Activated CD4-positive, alpha-beta T cell treated with anti-CD3 and anti-CD28 coated beads for 36 hours (primary cell): ENCODE measurements at regions of chr3 and their contacts with region 1.

Region 1: GRCh38 chr3:182683453-182683852 is 109.9 kb upstream of the ATP11B start:
- DNase-seq: peak; percentile 72
- ATAC-seq: peak; percentile 77
- H3K4me3 Mint-ChIP-seq: peak overlapping the region; percentile 52
- H3K27ac Mint-ChIP-seq: no peak overlapping the region
- H3K4me1 Mint-ChIP-seq: peaks cover 9% of the 10 kb centered on the region
- H3K27me3 Mint-ChIP-seq: peaks cover 39% of the 10 kb centered on the region

Region 2: GRCh38 chr3:181210275-181210674 is 1473.2 kb before region 1 on chr3:
- CTCF ChIA-PET with region 1: no interaction called
- POLR2A ChIA-PET with region 1: no interaction called
- intact Hi-C with region 1: loop called (anchors 2 to 10 kb)
- DNase-seq: no peak
- ATAC-seq: no peak
- H3K4me3 Mint-ChIP-seq: no peak overlapping the region
- H3K27ac Mint-ChIP-seq: no peak overlapping the region
- H3K4me1 Mint-ChIP-seq: no peaks in the 10 kb centered on the region
- H3K27me3 Mint-ChIP-seq: peaks cover 2% of the 10 kb centered on the region

Region 3: DNA sequence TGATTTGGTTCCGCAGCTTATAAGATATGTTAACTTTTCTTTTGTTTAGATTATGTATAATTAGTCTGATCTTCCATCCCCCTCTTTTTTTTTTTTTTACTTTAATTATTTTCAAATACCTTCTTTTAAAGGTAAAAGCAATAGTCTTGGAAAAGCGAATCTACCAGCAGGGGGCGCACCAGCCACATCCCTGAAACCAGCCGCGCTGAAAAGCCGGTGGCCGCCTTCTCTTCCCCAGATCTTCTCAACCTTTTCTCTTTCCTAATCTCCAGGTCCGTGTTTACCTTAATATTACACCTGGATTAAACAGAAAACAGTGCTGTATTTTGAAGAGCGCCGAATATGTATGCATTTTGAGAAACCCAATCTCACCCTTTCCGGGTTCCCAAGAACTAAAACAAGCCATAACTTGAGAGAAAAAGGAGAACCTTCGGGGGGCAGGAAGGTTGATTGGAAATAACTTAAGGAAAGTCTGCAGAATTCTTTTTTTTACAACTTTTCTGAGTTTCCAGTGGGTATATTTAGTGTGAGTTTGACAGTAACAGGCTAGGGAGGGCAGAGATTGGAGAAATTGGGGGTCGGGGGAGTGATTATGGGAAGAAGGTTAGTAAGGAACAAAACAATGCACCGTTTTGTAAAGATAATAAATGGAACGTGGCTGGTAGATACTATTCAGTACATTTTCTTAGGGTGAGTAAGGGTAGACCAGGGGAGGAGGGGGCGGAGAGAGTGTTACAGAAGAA is 973.7 kb before region 1 on chr3:
- CTCF ChIA-PET with region 1: interaction called, 13 read pairs
- POLR2A ChIA-PET with region 1: no interaction called
- intact Hi-C with region 1: loop called (anchors 1 kb)
- DNase-seq: peak; percentile 85
- ATAC-seq: no peak
- H3K4me3 Mint-ChIP-seq: no peak overlapping the region
- H3K27ac Mint-ChIP-seq: no peak overlapping the region
- H3K4me1 Mint-ChIP-seq: peaks cover 6% of the 10 kb centered on the region
- H3K27me3 Mint-ChIP-seq: peaks cover 52% of the 10 kb centered on the region

Region 4: DNA sequence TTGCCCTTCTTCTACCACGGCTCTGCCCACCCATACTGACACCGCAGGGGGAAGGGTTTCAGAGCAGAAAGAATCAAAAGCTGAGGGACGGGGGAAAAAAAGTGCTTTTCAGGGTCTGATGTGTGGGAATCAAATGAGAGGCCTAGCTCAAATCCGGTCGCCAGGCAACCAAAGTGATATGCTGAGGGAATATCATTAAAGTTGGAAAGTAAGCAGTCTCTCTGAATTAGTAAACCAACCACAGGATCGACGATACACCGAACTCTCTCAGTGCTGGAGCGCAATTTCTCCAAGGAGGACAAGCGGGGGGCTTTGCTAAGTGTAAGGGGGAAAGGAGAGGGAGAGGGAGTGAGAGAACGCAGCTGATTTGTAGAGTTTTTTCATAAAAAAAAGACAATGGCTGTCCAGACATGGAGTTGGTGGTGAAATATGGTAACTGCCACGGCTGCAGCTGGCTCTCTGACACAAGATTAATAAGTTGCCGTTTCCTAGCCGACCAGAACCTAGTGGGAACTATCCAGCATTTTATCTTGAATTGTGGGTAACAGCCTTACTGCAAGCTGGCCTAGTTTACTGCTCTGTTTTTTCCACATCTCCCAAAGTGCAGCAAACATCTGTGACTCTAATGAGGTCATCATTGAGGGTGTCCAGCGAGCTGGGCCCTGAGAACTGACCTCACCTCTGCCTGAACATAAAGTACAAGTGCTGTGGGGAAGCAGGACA is 441.5 kb before region 1 on chr3:
- CTCF ChIA-PET with region 1: no interaction called
- POLR2A ChIA-PET with region 1: no interaction called
- intact Hi-C with region 1: loop called in 1 of 2 experiments (anchors 10 kb)
- DNase-seq: no peak
- ATAC-seq: no peak
- H3K4me3 Mint-ChIP-seq: no peak overlapping the region
- H3K27ac Mint-ChIP-seq: no peak overlapping the region
- H3K4me1 Mint-ChIP-seq: no peaks in the 10 kb centered on the region
- H3K27me3 Mint-ChIP-seq: no peaks in the 10 kb centered on the region

Region 5: DNA sequence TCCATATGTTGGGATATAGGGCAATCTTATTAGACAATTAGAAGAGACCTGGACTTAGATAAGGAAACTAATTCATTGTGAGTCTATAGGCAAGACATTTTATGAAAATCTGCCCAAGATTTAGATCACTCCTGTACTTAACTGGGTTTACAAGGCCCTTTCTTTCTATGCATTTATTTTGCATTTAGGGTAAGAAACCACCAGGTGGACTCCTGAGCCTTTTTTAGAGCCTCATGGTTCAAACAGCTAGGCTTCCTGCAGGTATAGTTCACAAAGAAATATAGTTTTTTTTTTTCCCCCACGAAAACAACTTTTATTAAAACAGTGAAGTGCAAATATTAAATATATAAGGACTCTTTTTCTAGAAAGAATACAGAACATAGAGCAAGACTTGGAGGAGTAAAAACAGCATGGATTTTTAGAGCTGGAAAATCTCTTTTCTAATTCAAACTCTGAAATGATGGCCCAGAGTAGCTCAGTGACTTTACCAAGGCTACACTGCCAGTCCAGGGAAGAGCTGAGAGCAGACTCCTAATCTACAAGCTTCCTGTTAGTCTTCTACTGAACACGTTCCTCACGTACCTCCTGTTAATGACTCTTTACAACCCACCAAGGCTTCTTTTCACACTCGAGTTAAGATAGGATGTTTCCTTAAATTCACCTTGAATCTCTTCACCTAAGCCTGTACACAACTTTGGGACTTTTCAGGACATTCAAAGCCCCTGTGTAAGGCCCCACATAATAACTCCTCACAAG is 291.1 kb before region 1 on chr3:
- CTCF ChIA-PET with region 1: interaction called, 4 read pairs
- POLR2A ChIA-PET with region 1: no interaction called
- intact Hi-C with region 1: loop called in 1 of 2 experiments (anchors 10 kb)
- DNase-seq: no peak
- ATAC-seq: no peak
- H3K4me3 Mint-ChIP-seq: no peak overlapping the region
- H3K27ac Mint-ChIP-seq: no peak overlapping the region
- H3K4me1 Mint-ChIP-seq: no peaks in the 10 kb centered on the region
- H3K27me3 Mint-ChIP-seq: no peaks in the 10 kb centered on the region